ENCODE measurements at regions of chr11 and their contacts with region 1.

Region 1: GRCh38 chr11:109612496-109612895 is 190.5 kb downstream of the C11orf87 start:
- DNase-seq: no peak
- H3K4me3 ChIP-seq: no peak overlapping the region
- H3K27ac ChIP-seq: no peak overlapping the region
- H3K4me1 ChIP-seq: no peaks in the 10 kb centered on the region
- H3K27me3 ChIP-seq: no peaks in the 10 kb centered on the region
- CTCF ChIP-seq: no peak
- POLR2A ChIP-seq: no peak

Region 2: GRCh38 chr11:109641549-109641948 is 29.1 kb after region 1 on chr11:
- intact Hi-C with region 1: loop called (anchors 1 kb)
- DNase-seq: no peak
- H3K4me3 ChIP-seq: no peak overlapping the region
- H3K27ac ChIP-seq: no peak overlapping the region
- H3K4me1 ChIP-seq: no peaks in the 10 kb centered on the region
- H3K27me3 ChIP-seq: no peaks in the 10 kb centered on the region
- CTCF ChIP-seq: no peak
- POLR2A ChIP-seq: no peak

Region 3: GRCh38 chr11:109971184-109971523 is 358.7 kb after region 1 on chr11:
- intact Hi-C with region 1: no loop called
- DNase-seq: no peak
- H3K4me3 ChIP-seq: no peak overlapping the region
- H3K27ac ChIP-seq: no peak overlapping the region
- H3K4me1 ChIP-seq: peaks cover 9% of the 10 kb centered on the region
- H3K27me3 ChIP-seq: no peaks in the 10 kb centered on the region
- CTCF ChIP-seq: no peak
- POLR2A ChIP-seq: no peak